ENCODE measurements at regions of chr3 and their contacts with region 1.

Region 1: GRCh38 chr3:11651900-11652299 is 8.2 kb upstream of the VGLL4 start:
- DNase-seq: no peak
- ATAC-seq: no peak

Region 2: DNA sequence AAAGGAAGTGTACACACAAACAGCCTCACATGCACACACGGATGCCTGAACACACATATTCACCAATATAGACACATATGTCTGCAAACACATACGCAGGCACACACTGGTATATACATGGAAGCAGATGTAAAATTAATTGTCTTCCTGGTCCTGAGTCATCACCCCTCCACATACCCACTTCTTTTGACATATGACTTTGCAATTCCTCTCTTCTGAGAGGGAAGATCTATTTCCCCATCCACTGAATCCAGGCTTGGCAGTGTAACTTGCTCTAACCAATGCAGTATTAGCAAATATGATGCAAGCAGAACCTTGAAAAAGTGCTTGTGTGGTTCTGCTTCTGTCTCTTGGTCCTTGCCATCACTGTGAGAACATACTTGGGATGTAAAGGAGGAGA is 574.4 kb before region 1 on chr3:
- intact Hi-C with region 1: no loop called
- DNase-seq: no peak
- ATAC-seq: peak; percentile 49

Region 3: DNA sequence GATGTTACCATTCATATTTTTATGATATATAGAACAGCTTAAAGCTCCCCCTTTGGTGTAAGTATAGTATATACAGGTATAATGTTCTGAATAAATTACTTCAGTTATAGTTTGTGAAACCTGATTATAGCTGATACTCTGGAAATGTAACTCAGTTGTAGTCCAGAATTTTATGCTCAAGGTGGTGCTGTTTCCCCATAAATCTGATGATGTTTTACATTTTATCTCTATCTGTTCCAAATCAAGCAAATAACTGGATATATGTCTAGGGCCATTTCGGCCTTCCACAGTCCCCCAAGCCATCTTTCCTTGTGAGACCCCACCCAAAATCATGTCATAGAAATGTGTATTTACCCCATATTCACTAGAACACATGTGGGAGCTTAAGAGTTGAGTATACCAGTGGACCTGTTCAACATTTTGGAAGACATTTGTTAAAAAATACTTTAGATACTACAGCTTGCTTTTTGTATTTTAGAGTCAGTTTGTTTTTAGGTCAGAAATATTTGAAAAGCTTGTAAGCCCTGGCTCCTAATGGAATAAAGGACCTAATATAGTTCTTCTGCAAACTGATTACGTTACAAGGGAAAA is 272.6 kb before region 1 on chr3:
- intact Hi-C with region 1: loop called (anchors 5 kb)
- DNase-seq: no peak
- ATAC-seq: peak; percentile 66

Region 4: GRCh38 chr3:11803977-11804892 is 152.3 kb after region 1 on chr3:
- intact Hi-C with region 1: loop called (anchors 10 kb)
- DNase-seq: peak; percentile 31
- ATAC-seq: peak; percentile 72